Activated CD4-positive, alpha-beta memory T cell treated with anti-CD3 and anti-CD28 coated beads for 36 hours (primary cell): ENCODE measurements at regions of chr2 and their contacts with region 1.

Region 1: GRCh38 chr2:176269319-176270099 is at the start of gene MTX2:
- DNase-seq: peak; percentile 79
- H3K4me3 Mint-ChIP-seq: peak within 1 kb of the TSS; percentile 98
- H3K27ac Mint-ChIP-seq: peak within 1 kb of the TSS; percentile 84
- H3K4me1 Mint-ChIP-seq: peaks cover 16% of the 10 kb centered on the region
- H3K27me3 Mint-ChIP-seq: peaks cover 2% of the 10 kb centered on the region
- total RNA-seq, gene MTX2: 25.8 to 28.2 TPM

Region 2: GRCh38 chr2:176001916-176002687 is 267.4 kb before region 1 on chr2 and contains the start of gene LNPK:
- CTCF ChIA-PET with region 1: no interaction called
- POLR2A ChIA-PET with region 1: no interaction called
- intact Hi-C with region 1: loop called (anchors 2 kb)
- DNase-seq: peak; percentile 96
- H3K4me3 Mint-ChIP-seq: peak within 1 kb of the TSS; percentile 90
- H3K27ac Mint-ChIP-seq: peak within 1 kb of the TSS; percentile 85
- H3K4me1 Mint-ChIP-seq: peaks cover 22% of the 10 kb centered on the region
- H3K27me3 Mint-ChIP-seq: peaks cover 3% of the 10 kb centered on the region
- total RNA-seq, gene LNPK: 31.2 to 36.6 TPM

Region 3: GRCh38 chr2:176291809-176292283 is 22.3 kb after region 1 on chr2:
- CTCF ChIA-PET with region 1: no interaction called
- POLR2A ChIA-PET with region 1: no interaction called
- intact Hi-C with region 1: loop called (anchors 1 kb)
- DNase-seq: no peak
- H3K4me3 Mint-ChIP-seq: no peak overlapping the region
- H3K27ac Mint-ChIP-seq: peak overlapping the region; percentile 33
- H3K4me1 Mint-ChIP-seq: peaks cover 24% of the 10 kb centered on the region
- H3K27me3 Mint-ChIP-seq: no peaks in the 10 kb centered on the region